ENCODE measurements at regions of chr9 and their contacts with region 1.

Region 1: DNA sequence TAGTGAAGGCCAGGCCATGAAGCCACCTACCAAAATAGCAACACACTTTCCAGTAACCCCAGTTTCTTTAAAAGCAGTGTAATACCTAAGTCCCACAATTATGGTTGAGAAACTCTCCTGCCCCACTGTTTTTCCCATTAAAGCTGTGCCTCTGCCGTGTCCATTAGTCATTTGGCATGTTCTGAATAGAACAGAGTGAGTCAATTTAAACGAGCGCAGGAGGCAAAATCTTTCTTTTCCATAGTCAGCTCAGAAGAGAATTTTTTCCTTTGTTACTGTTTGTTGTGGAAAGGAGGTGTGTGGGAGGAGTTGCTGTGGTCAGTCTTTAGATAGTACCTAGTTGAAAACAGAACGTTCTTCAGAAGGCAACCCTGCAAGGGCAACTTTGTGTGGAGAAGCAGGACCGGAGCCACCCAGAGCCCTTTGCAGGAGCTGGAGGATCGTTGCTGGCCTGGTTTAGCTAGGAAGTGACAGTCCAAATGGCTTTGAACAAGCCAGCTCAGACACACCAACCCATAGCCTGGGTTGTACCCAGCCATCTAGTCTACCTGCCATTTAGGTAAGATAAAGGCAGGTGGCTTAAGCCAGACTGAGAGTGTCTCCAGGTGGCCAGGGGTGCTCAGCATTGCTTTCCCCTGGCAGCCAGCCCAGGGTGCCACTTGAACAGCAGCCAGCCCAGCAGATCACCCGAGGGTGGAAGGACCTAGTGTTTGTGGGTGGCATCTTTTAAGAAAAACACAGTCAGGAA is 30.4 kb downstream of the GADD45G start:
- DNase-seq: no peak
- H3K4me3 ChIP-seq: no peak overlapping the region
- H3K27ac ChIP-seq: peak overlapping the region; percentile 48 to 72 (median 62)
- H3K4me1 ChIP-seq: peaks cover 39 to 68% (median 59%) of the 10 kb centered on the region in 4 donors
- H3K27me3 ChIP-seq: no peaks in the 10 kb centered on the region
- CTCF ChIP-seq: no peak
- EP300 ChIP-seq: peak; percentile 3
- POLR2A ChIP-seq: no peak

Region 2: GRCh38 chr9:89732295-89732938 is 97.2 kb after region 1 on chr9:
- intact Hi-C with region 1: loop called (anchors 5 kb)
- DNase-seq: no peak
- H3K4me3 ChIP-seq: no peak overlapping the region
- H3K27ac ChIP-seq: peak overlapping the region in 2 of 4 donors; percentile 14 to 35
- H3K4me1 ChIP-seq: peaks cover 25 to 30% (median 28%) of the 10 kb centered on the region in 4 donors
- H3K27me3 ChIP-seq: no peaks in the 10 kb centered on the region
- CTCF ChIP-seq: no peak
- EP300 ChIP-seq: no peak
- POLR2A ChIP-seq: no peak

Measured in esophagus muscularis mucosa (tissue), 4 donors.